Activated naive CD4-positive, alpha-beta T cell treated with anti-CD3 and anti-CD28 coated beads for 36 hours (primary cell): ENCODE measurements at regions of chr12 and their contacts with region 1.

Region 1: GRCh38 chr12:54497883-54498282 is 331 bp downstream of the NCKAP1L start:
- DNase-seq: no peak
- H3K4me3 Mint-ChIP-seq: peak overlapping the region; percentile 95
- H3K27ac Mint-ChIP-seq: peak overlapping the region; percentile 97
- H3K4me1 Mint-ChIP-seq: peaks cover 36% of the 10 kb centered on the region
- H3K27me3 Mint-ChIP-seq: no peaks in the 10 kb centered on the region

Region 2: DNA sequence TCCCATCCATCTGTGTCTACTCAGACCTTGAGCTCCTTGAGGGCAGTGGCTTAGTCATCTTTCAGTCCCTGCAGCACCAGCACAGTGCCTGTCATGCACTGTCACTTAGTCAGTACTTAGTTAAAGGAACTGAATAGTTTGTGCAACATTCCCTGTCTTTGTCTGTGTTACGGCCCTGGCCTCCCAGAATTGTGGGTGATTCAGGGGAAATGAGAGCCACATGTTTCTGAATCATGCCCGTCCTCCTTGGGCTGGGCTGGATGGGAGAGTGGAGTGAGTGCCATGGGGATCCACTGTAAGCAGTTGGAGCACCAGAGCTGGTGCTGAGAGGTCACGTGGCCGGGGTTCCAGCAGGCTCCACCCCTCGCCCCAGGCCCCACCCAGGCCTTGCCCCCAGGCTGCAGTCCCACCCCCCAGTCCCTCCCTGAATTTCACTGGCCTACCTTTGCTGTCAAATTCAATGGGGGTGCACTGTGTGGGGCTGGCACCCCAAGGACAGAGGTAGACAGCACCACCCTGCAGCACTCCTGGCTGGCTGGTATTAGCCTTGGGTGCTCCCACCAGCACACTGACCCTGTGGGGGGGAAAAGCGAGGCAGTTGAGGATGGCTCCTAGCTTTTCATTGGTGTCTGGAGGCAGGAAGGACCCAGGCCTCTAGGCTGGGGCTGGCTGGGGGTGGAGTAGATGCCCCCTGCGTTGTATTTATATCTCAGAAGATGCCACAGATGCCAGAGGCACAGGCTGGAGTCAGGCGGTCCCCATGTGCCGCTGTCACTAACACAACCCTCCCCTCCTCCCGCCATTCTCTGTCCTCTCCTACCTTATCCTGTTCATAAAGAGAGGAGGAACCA is 86.3 kb before region 1 on chr12:
- CTCF ChIA-PET with region 1: interaction called, 3 read pairs
- intact Hi-C with region 1: loop called (anchors 2 kb)
- DNase-seq: peak; percentile 71
- H3K4me3 Mint-ChIP-seq: peak overlapping the region; percentile 38
- H3K27ac Mint-ChIP-seq: peak overlapping the region; percentile 96
- H3K4me1 Mint-ChIP-seq: peaks cover 58% of the 10 kb centered on the region
- H3K27me3 Mint-ChIP-seq: no peaks in the 10 kb centered on the region

Region 3: GRCh38 chr12:54431911-54432814 is 65.7 kb before region 1 on chr12:
- CTCF ChIA-PET with region 1: no interaction called
- intact Hi-C with region 1: no loop called
- DNase-seq: no peak
- H3K4me3 Mint-ChIP-seq: no peak overlapping the region
- H3K27ac Mint-ChIP-seq: no peak overlapping the region
- H3K4me1 Mint-ChIP-seq: peaks cover 25% of the 10 kb centered on the region
- H3K27me3 Mint-ChIP-seq: no peaks in the 10 kb centered on the region

Region 4: DNA sequence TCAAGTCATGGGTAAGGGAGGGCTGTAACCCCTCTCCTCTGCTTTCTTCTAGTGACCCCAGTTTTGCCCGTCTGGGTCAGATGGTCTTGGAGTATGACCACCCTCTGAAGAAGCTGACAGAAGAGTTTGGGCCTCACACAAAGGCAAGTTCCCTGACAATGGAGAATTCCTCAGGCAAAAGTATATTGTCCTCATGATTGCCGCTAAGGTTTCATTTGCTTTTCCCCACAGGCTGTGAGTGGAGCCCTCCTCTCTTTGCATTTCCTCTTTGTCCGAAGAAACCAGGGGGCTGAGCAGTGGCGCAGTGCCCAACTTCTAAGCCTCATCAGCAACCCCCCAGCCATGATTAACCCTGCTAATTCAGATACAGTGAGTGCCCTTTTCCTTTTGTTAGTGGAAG is 11.7 kb after region 1 on chr12:
- CTCF ChIA-PET with region 1: no interaction called
- intact Hi-C with region 1: loop called (anchors 1 kb)
- DNase-seq: no peak
- H3K4me3 Mint-ChIP-seq: no peak overlapping the region
- H3K27ac Mint-ChIP-seq: no peak overlapping the region
- H3K4me1 Mint-ChIP-seq: peaks cover 17% of the 10 kb centered on the region
- H3K27me3 Mint-ChIP-seq: no peaks in the 10 kb centered on the region

Region 5: DNA sequence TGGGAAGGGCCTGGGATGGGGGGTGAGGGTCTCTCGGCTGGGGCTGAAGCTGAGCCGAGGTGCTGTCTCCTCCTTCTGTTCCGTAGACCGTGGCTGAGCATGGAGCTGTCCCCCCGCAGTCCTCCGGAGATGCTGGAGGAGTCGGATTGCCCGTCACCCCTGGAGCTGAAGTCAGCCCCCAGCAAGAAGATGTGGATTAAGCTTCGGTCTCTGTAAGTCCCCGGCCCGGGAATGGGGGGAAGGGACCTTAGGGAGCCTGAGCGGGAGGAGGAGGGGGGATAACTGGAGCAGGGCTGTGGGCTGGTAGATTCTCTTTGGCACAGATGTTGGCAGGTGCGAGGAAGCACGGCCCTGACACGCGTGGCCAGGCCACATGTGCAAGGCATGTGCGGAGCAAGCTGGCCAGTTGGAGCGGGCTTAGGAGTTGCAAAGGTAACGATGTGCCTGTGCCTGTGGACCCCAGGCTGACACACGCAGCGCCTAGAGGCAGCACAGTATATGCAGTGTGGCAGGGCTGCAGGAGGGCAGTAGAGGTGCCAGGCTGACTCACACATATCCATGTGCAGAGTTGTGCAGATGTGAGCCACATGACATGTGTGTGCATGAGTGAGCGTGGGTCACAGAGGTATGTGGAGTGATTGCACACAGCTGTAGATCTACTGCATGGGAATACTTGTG is 52.0 kb after region 1 on chr12:
- CTCF ChIA-PET with region 1: no interaction called
- intact Hi-C with region 1: loop called (anchors 1 kb)
- DNase-seq: peak; percentile 63
- H3K4me3 Mint-ChIP-seq: peak overlapping the region; percentile 82
- H3K27ac Mint-ChIP-seq: no peak overlapping the region
- H3K4me1 Mint-ChIP-seq: peaks cover 36% of the 10 kb centered on the region
- H3K27me3 Mint-ChIP-seq: peaks cover 6% of the 10 kb centered on the region

Region 6: GRCh38 chr12:54560374-54560858 is 62.5 kb after region 1 on chr12:
- CTCF ChIA-PET with region 1: interaction called, 3 read pairs
- intact Hi-C with region 1: loop called (anchors 1 kb)
- DNase-seq: peak; percentile 97
- H3K4me3 Mint-ChIP-seq: peak overlapping the region; percentile 72
- H3K27ac Mint-ChIP-seq: peak overlapping the region; percentile 80
- H3K4me1 Mint-ChIP-seq: peaks cover 31% of the 10 kb centered on the region
- H3K27me3 Mint-ChIP-seq: peaks cover 3% of the 10 kb centered on the region

Region 7: DNA sequence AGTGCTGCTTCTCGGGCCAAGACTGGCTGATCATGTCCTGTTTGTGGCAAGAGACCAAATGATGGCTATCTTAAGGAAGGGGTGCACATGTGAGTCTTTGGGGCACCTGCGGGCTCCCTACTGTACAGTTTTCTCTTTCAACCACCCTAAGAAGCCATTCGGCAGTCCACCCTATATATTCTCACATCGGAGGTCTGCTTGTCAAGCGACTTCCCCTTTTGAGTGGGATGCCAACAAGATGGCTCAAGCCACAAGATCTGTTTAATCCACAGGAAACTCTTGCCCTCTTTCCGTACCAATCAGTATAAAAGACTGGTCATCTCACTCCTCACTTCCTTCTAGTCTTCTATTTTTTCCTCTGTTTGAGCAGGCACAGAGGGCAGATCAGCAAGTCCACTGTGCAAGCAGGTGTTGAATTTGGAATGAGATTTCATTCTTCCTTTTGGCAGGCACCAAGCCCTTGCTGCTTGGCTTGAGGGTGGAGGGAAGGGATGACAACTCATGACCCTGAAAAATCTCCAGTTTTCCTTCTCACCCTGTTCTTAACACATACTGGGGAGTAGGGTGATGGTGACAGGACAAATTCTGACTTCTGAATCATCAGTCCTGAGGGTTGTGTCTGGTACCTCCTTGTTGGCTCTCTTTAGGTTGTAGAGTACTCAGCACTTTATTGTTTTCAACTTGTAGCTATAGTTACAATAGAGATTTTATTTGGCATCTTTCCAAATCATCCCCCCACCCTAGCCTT is 119.2 kb after region 1 on chr12:
- CTCF ChIA-PET with region 1: no interaction called
- intact Hi-C with region 1: no loop called
- DNase-seq: no peak
- H3K4me3 Mint-ChIP-seq: no peak overlapping the region
- H3K27ac Mint-ChIP-seq: no peak overlapping the region
- H3K4me1 Mint-ChIP-seq: peaks cover 2% of the 10 kb centered on the region
- H3K27me3 Mint-ChIP-seq: peaks cover 15% of the 10 kb centered on the region